CD4-positive, alpha-beta memory T cell (primary cell): ENCODE measurements at regions of chr1 and their contacts with region 1.

Region 1: GRCh38 chr1:93909146-93910050 is at the start of gene GCLM:
- DNase-seq: peak; percentile 86 to 90 (median 88)
- H3K4me3 ChIP-seq: peak within 1 kb of the TSS; percentile 53 to 67
- H3K4me3 Mint-ChIP-seq: peak within 1 kb of the TSS; percentile 85 to 99 (median 92)
- H3K27ac ChIP-seq: peak within 1 kb of the TSS; percentile 61
- H3K27ac Mint-ChIP-seq: peak within 1 kb of the TSS; percentile 83 to 98 (median 94)
- H3K4me1 ChIP-seq: peaks cover 37% of the 10 kb centered on the region
- H3K4me1 Mint-ChIP-seq: peaks cover 30 to 40% (median 33%) of the 10 kb centered on the region in 4 donors
- H3K27me3 ChIP-seq: no peaks in the 10 kb centered on the region
- H3K27me3 Mint-ChIP-seq: peaks cover 0 to 2% of the 10 kb centered on the region in 2 donors
- total RNA-seq, gene GCLM: 22.0 to 26.8 TPM

Region 2: GRCh38 chr1:92831762-92832536 is 1077.4 kb before region 1 on chr1 and contains the start of gene RPL5:
- CTCF ChIA-PET with region 1: no interaction called
- POLR2A ChIA-PET with region 1: no interaction called
- intact Hi-C with region 1: loop called (anchors 1 kb)
- DNase-seq: peak; percentile 97 to 100 (median 98)
- H3K4me3 ChIP-seq: peak within 1 kb of the TSS; percentile 54 to 100
- H3K4me3 Mint-ChIP-seq: peak within 1 kb of the TSS; percentile 98 to 100 (median 100)
- H3K27ac ChIP-seq: peak within 1 kb of the TSS; percentile 93
- H3K27ac Mint-ChIP-seq: peak within 1 kb of the TSS; percentile 98 to 100 (median 99)
- H3K4me1 ChIP-seq: peaks cover 46% of the 10 kb centered on the region
- H3K4me1 Mint-ChIP-seq: peaks cover 35 to 55% (median 45%) of the 10 kb centered on the region in 4 donors
- H3K27me3 ChIP-seq: no peaks in the 10 kb centered on the region
- H3K27me3 Mint-ChIP-seq: peaks cover 0 to 1% of the 10 kb centered on the region in 2 donors
- total RNA-seq, gene RPL5: 1,501 to 1,588 TPM

Region 3: DNA sequence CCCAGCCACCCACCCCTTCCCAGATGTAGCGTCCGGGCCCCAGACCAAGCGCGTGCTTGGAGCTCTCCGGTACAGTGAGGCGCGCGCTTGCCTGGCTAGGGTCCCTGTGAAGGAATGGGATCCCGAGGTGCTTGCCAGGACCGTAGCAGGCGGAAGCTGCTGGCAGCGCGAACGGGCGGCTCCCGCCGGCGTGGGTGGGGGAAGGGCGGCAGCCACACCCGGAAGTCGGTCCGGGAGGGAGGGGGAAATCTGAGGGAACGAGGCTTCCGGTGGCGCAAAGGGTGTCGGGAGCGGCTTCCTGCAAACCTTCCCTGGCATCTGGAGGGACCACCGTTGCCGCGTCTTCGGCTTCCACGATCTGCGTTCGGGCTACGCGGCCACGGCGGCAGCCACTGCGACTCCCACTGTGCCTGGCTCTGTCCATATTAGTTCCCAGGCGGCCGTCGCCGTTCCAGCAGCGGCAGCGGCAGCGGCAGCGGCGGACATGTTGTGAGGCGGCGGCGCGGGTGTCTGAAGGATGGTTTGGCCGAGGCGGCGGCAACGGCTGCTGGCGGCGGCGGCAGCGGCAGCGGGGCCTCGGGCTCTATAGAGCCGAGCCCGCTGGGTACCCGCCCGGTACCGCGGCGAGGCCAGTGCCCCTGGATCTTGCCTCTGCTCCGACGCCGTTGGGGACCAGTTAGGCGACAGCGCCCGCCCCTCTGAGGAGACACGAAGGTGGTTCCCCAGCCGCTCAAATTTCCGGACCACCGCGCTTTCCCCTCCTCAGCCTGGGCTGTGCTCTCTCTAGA is 563.6 kb before region 1 on chr1 and contains the start of gene DR1:
- CTCF ChIA-PET with region 1: no interaction called
- POLR2A ChIA-PET with region 1: interaction called, 3 read pairs
- intact Hi-C with region 1: loop called (anchors 2 kb)
- DNase-seq: peak; percentile 87 to 92 (median 89)
- H3K4me3 ChIP-seq: peak within 1 kb of the TSS; percentile 80 to 100
- H3K4me3 Mint-ChIP-seq: peak within 1 kb of the TSS; percentile 96 to 99 (median 98)
- H3K27ac ChIP-seq: peak within 1 kb of the TSS; percentile 91
- H3K27ac Mint-ChIP-seq: peak within 1 kb of the TSS; percentile 95 to 99 (median 98)
- H3K4me1 ChIP-seq: peaks cover 46% of the 10 kb centered on the region
- H3K4me1 Mint-ChIP-seq: peaks cover 23 to 59% (median 30%) of the 10 kb centered on the region in 4 donors
- H3K27me3 ChIP-seq: no peaks in the 10 kb centered on the region
- H3K27me3 Mint-ChIP-seq: no peaks in the 10 kb centered on the region
- total RNA-seq, gene DR1: 71.8 to 71.9 TPM

Region 4: DNA sequence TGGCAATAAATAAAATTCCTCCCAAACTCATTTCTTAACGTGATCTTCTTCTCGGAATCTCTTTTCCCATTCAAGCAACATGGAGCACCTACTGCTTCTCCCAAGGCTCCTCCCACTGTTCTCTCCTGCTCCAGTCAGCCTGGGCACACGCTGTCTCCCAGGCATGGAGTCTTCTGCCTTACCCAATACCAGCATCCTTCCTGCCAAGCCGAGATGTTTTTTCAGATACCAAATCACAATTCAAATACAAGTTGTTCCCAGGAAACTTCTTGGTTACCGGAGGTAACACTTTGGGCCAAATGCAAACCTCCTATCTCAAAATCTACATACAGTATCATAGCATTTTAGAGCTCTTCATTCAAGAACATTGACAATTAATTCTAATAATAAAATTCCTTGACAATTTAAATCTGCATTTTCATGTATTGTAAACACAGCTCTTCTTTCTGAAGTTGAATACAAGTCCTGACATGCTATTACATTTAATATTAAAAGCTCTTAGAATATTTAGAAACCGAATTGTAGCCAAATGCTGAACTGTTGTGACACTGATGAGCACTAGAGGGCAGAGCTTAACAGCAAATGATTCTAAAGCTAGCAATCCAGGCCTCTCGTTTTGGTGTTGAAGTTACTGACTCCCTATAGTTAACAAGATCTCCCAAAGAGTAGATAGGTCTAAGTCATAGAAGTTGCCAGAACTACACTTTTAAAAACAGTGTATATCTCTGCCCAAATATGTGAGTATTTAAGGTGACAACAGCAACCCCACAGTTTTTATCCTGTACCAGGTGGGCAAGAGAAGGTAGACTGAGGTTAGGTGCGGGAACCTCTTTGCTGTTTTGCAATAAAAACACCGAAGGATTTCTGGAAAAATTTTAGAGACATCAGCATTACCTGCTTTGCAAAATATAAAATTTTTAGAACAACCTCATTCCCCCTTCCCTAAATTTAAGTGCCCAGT is 280.0 kb before region 1 on chr1:
- CTCF ChIA-PET with region 1: interaction called, 18 read pairs
- POLR2A ChIA-PET with region 1: interaction called, 4 read pairs
- intact Hi-C with region 1: loop called (anchors 1 kb)
- DNase-seq: peak in 4 of 5 donors; percentile 62 to 69 (median 63)
- H3K4me3 ChIP-seq: no peak overlapping the region
- H3K4me3 Mint-ChIP-seq: no peak overlapping the region
- H3K27ac ChIP-seq: no peak overlapping the region
- H3K27ac Mint-ChIP-seq: peak overlapping the region in 2 of 7 donors; percentile 46 to 55
- H3K4me1 ChIP-seq: no peaks in the 10 kb centered on the region
- H3K4me1 Mint-ChIP-seq: no peaks in the 10 kb centered on the region
- H3K27me3 ChIP-seq: no peaks in the 10 kb centered on the region
- H3K27me3 Mint-ChIP-seq: no peaks in the 10 kb centered on the region

Region 5: DNA sequence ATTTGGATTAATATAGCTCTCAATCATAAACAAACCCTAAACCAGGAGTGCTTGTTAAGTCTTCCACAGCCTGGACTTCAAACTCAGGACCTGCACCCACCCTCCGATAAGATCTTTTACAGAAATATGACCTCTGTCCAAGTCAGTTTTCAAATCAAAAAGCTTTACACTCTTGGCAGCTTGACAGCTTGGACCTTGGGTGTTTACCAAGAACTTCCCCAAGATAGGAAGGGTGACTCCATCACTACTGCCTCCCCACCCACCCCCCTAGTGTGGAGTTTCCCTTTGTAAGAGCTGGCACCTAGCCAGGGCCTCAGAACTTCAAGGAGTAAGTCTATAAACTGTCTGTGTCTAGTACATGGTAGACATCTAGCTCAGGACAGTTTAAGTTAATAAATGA is 237.3 kb before region 1 on chr1:
- CTCF ChIA-PET with region 1: no interaction called
- POLR2A ChIA-PET with region 1: no interaction called
- intact Hi-C with region 1: no loop called
- DNase-seq: no peak
- H3K4me3 ChIP-seq: no peak overlapping the region
- H3K4me3 Mint-ChIP-seq: no peak overlapping the region
- H3K27ac ChIP-seq: no peak overlapping the region
- H3K27ac Mint-ChIP-seq: no peak overlapping the region
- H3K4me1 ChIP-seq: no peaks in the 10 kb centered on the region
- H3K4me1 Mint-ChIP-seq: peaks cover 0 to 1% (median 0%) of the 10 kb centered on the region in 4 donors
- H3K27me3 ChIP-seq: no peaks in the 10 kb centered on the region
- H3K27me3 Mint-ChIP-seq: peaks cover 1 to 2% of the 10 kb centered on the region in 2 donors

Region 6: GRCh38 chr1:93768380-93768863 is 141.0 kb before region 1 on chr1:
- CTCF ChIA-PET with region 1: no interaction called
- POLR2A ChIA-PET with region 1: no interaction called
- intact Hi-C with region 1: no loop called
- DNase-seq: no peak
- H3K4me3 ChIP-seq: no peak overlapping the region
- H3K4me3 Mint-ChIP-seq: no peak overlapping the region
- H3K27ac ChIP-seq: no peak overlapping the region
- H3K27ac Mint-ChIP-seq: no peak overlapping the region
- H3K4me1 ChIP-seq: no peaks in the 10 kb centered on the region
- H3K4me1 Mint-ChIP-seq: peaks cover 8 to 15% (median 10%) of the 10 kb centered on the region in 4 donors
- H3K27me3 ChIP-seq: no peaks in the 10 kb centered on the region
- H3K27me3 Mint-ChIP-seq: no peaks in the 10 kb centered on the region

Region 7: GRCh38 chr1:94417978-94418663 is 508.7 kb after region 1 on chr1 and contains the start of gene ABCD3:
- CTCF ChIA-PET with region 1: no interaction called
- POLR2A ChIA-PET with region 1: interaction called, 3 read pairs
- intact Hi-C with region 1: loop called (anchors 2 kb)
- DNase-seq: peak; percentile 96 to 99 (median 98)
- H3K4me3 ChIP-seq: peak within 1 kb of the TSS; percentile 59 to 88
- H3K4me3 Mint-ChIP-seq: peak within 1 kb of the TSS in 2 of 8 donors; percentile 90 to 91
- H3K27ac ChIP-seq: peak within 1 kb of the TSS; percentile 70
- H3K27ac Mint-ChIP-seq: peak within 1 kb of the TSS in 6 of 7 donors; percentile 37 to 92 (median 88)
- H3K4me1 ChIP-seq: peaks cover 46% of the 10 kb centered on the region
- H3K4me1 Mint-ChIP-seq: peaks cover 23 to 40% (median 28%) of the 10 kb centered on the region in 4 donors
- H3K27me3 ChIP-seq: no peaks in the 10 kb centered on the region
- H3K27me3 Mint-ChIP-seq: peaks cover 0 to 4% of the 10 kb centered on the region in 2 donors
- total RNA-seq, gene ABCD3: 23.6 to 23.8 TPM

Region 8: GRCh38 chr1:95072532-95073419 is 1163.4 kb after region 1 on chr1 and contains the start of gene ALG14:
- CTCF ChIA-PET with region 1: no interaction called
- POLR2A ChIA-PET with region 1: interaction called, 3 read pairs
- intact Hi-C with region 1: loop called (anchors 2 kb)
- DNase-seq: peak; percentile 94 to 96 (median 95)
- H3K4me3 ChIP-seq: peak within 1 kb of the TSS; percentile 93 to 96
- H3K4me3 Mint-ChIP-seq: peak within 1 kb of the TSS; percentile 96 to 99 (median 98)
- H3K27ac ChIP-seq: peak within 1 kb of the TSS; percentile 83
- H3K27ac Mint-ChIP-seq: peak within 1 kb of the TSS; percentile 96 to 99 (median 98)
- H3K4me1 ChIP-seq: peaks cover 14% of the 10 kb centered on the region
- H3K4me1 Mint-ChIP-seq: peaks cover 12 to 21% (median 18%) of the 10 kb centered on the region in 4 donors
- H3K27me3 ChIP-seq: no peaks in the 10 kb centered on the region
- H3K27me3 Mint-ChIP-seq: peaks cover 2 to 5% of the 10 kb centered on the region in 2 donors
- total RNA-seq, gene ALG14: 1.1 to 3.2 TPM